ENCODE measurements at regions of chr1 and their contacts with region 1.

Region 1: DNA sequence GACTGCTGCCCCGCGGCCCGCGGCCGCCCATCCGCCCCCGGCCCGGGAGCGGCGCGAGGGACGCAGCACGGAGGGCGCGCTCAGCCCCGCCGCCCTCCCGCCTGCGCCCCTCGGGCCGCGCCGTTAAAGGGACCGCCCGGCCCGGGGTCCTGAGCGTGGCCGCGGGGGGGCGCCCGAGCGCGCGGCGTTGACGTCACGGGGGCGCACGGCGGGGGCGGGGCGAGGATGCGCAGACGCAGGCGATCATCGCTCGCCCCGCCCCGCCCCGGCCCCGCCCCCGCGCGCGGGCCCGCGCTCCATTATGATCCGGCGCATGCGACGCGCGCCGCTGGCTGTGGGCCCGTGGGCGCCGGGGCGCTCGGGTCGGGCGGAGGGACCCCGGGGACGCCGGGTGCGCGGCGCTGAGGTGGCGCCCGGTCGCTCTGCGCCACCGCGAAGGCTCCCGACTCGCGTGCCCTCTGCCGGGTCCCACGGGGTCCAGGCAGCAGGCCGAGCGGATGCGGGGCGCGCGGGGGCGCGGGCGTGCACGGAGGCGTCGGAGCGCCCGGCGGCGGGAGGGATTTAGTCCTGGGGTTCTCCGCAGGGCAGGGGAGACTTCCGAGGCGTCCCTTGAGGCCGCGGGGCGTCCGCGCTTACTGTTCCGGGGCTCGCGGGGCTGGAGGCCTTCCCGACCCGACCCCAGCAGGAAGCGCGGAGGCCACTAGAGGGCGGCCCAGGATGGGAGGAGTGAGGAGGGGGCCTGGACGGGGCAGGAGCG is at the start of gene DVL1:
- DNase-seq: peak in 5 of 10 donors; percentile 23 to 76 (median 49)
- H3K4me3 ChIP-seq: peak within 1 kb of the TSS; percentile 53 to 90 (median 76)
- H3K27ac ChIP-seq: peak within 1 kb of the TSS in 54 of 59 donors; percentile 18 to 96 (median 86)
- H3K27me3 ChIP-seq: peaks cover 0 to 10% (median 0%) of the 10 kb centered on the region in 45 donors
- CTCF ChIP-seq: peak in 50 of 56 donors; percentile 15 to 60 (median 41)
- total RNA-seq, gene DVL1: 86.3 to 201 (median 114) TPM

Region 2: GRCh38 chr1:1307908-1308755 is 41.3 kb before region 1 on chr1 and contains the starts of genes ACAP3 and PUSL1:
- intact Hi-C with region 1: loop called (anchors 1 to 5 kb)
- DNase-seq: peak; percentile 69 to 90 (median 86)
- H3K4me3 ChIP-seq: peak within 1 kb of the TSS; percentile 65 to 97 (median 89)
- H3K27ac ChIP-seq: peak within 1 kb of the TSS; percentile 86 to 100 (median 99)
- H3K27me3 ChIP-seq: no peaks in the 10 kb centered on the region
- CTCF ChIP-seq: peak in 34 of 56 donors; percentile 9 to 55 (median 34)
- total RNA-seq, gene ACAP3: 92.3 to 273 (median 164) TPM
- total RNA-seq, gene PUSL1: 9.1 to 22.8 (median 14.0) TPM

Region 3: GRCh38 chr1:1324521-1325287 is 24.7 kb before region 1 on chr1 and contains the starts of genes CPTP and INTS11:
- intact Hi-C with region 1: loop called in 1 of 2 experiments (anchors 2 kb)
- DNase-seq: peak; percentile 81 to 95 (median 92)
- H3K4me3 ChIP-seq: peak within 1 kb of the TSS; percentile 70 to 100 (median 97)
- H3K27ac ChIP-seq: peak within 1 kb of the TSS in 55 of 59 donors; percentile 25 to 92 (median 81)
- H3K27me3 ChIP-seq: no peaks in the 10 kb centered on the region
- CTCF ChIP-seq: peak in 12 of 56 donors; percentile 8 to 34 (median 20)
- total RNA-seq, gene CPTP: 16.2 to 34.2 (median 22.5) TPM
- total RNA-seq, gene INTS11: 87.2 to 200 (median 130) TPM

Region 4: DNA sequence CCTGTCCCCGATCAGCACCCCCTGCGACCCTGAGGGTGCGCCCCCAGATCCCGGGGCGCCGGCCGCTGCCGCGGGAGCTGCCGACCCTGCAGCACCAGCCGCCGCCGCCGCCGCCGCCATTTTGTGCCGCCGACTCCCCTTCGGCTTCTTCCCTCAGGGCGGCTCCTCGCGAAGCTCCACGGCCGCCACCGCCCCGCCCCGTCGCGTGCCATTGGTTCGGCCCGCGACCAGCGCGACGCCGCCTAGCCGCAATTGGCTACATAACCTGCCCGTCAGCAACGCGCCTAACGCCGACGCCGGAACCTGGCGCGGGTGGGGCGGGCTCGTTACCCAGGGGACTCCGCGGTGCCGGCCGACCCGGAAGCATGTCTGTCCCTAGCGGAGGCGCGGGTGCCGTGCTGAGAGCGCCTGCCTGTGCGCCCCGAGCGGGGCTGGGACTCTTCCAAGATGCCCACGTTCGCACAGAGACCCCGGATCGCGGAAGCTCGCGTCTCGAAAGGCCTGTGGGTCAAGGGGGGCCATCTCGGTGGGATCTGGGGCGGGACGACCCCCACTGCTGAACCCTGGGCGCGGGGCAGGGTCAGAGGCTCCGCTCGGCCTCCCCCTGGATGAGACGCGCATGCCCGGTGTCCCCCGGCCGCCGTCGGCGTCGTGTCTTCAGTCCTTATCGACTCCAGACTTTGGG is 49.9 kb after region 1 on chr1 and contains the start of gene CCNL2:
- intact Hi-C with region 1: no loop called
- DNase-seq: peak; percentile 96 to 99 (median 98)
- H3K4me3 ChIP-seq: peak within 1 kb of the TSS; percentile 78 to 100 (median 99)
- H3K27ac ChIP-seq: peak within 1 kb of the TSS; percentile 58 to 96 (median 90)
- H3K27me3 ChIP-seq: no peaks in the 10 kb centered on the region
- CTCF ChIP-seq: peak; percentile 23 to 80 (median 64)
- total RNA-seq, gene CCNL2: 111 to 235 (median 165) TPM

Region 5: DNA sequence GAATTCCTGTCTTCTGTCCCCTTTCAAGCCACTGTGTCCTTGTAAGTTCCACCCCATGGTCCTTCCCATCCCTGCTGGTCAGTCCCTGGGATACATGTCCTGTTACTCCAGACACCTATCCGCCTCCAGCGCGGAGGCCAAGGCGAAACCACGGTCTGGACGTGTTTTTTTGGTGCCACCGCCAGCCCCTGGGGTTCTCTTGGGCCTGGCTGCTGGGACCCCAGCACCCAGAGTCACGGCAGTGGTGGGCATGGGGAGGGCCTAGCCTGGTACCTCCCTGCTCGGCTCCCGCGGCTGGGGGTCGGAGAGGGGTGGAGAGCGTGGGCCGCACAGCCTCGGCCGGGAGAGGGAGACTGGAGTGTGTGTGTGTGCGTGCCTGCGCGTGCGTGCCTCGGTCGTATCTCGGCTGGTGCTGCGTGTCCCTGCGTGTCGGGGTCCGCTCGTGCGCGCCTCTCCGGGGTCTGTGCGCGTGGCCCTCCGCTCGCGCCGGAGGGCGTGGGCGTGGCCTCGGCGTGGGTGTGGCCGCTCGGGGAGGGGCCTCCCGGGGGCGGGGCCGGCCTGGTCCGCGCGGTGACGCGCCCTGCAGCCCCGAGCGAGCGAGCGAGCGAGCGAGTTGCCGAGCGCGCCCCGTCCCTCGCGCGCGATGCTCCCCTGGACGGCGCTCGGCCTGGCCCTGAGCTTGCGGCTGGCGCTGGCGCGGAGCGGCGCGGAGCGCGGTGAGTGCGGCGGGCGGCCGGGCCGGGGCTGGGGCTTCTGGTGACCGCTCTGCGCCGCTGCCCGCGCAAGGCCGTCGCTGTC is 85.9 kb after region 1 on chr1 and contains the start of gene VWA1:
- intact Hi-C with region 1: loop called in 1 of 2 experiments (anchors 2 kb)
- DNase-seq: peak in 8 of 10 donors; percentile 53 to 86 (median 72)
- H3K4me3 ChIP-seq: peak within 1 kb of the TSS; percentile 39 to 82 (median 67)
- H3K27ac ChIP-seq: peak within 1 kb of the TSS; percentile 78 to 100 (median 97)
- H3K27me3 ChIP-seq: no peaks in the 10 kb centered on the region
- CTCF ChIP-seq: peak in 1 of 56 donors; percentile 6
- total RNA-seq, gene VWA1: 27.4 to 258 (median 73.3) TPM

Region 6: DNA sequence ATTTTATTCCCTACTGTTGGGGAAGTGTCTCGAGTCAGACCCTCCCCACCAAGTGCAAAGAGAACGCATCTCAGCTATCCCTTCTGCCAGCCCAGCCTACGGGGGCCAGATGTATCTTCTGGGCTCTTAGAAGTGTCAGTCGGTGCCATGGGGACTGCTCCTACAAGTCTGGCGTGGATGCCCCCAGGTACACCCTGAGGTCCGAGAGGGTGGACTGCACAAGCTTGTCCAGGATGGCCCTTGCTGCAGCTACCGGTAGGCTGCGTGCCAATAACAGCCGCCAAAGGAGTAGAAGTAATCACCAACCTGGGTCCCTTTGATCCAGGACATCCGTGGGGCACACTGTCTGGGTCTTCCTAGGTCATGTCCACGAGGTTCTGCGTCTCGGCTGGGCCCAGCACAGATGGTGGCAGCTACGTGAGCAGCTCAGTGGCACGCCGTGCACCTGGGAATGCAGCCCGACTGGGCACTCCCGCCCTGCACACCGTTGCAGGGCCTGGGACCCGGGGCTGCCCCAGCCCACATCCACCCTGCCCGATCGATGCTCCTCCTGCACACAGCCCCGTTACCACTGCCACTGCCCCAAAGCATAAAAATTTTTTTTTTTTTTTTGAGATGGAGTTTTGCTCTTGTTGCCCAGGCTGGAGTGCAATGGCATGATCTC is 234.0 kb after region 1 on chr1:
- intact Hi-C with region 1: no loop called
- DNase-seq: no peak
- H3K4me3 ChIP-seq: no peak overlapping the region
- H3K27ac ChIP-seq: no peak overlapping the region
- H3K27me3 ChIP-seq: no peaks in the 10 kb centered on the region
- CTCF ChIP-seq: no peak